ENCODE measurements at regions of chr9 and their contacts with region 1.

Region 1: GRCh38 chr9:81552581-81552991 is 136.8 kb downstream of the TLE1 start:
- DNase-seq: no peak
- H3K4me3 ChIP-seq: no peak overlapping the region
- H3K27ac ChIP-seq: no peak overlapping the region
- H3K4me1 ChIP-seq: peaks cover 4 to 21% (median 14%) of the 10 kb centered on the region in 4 donors
- H3K27me3 ChIP-seq: no peaks in the 10 kb centered on the region
- CTCF ChIP-seq: no peak
- EP300 ChIP-seq: no peak
- POLR2A ChIP-seq: no peak

Region 2: GRCh38 chr9:80842389-80842788 is 710.2 kb before region 1 on chr9:
- in situ Hi-C with region 1: no loop called
- intact Hi-C with region 1: no loop called
- DNase-seq: no peak
- H3K4me3 ChIP-seq: no peak overlapping the region
- H3K27ac ChIP-seq: no peak overlapping the region
- H3K4me1 ChIP-seq: peaks cover 0 to 6% (median 0%) of the 10 kb centered on the region in 4 donors
- H3K27me3 ChIP-seq: no peaks in the 10 kb centered on the region
- CTCF ChIP-seq: no peak
- EP300 ChIP-seq: no peak
- POLR2A ChIP-seq: no peak

Region 3: DNA sequence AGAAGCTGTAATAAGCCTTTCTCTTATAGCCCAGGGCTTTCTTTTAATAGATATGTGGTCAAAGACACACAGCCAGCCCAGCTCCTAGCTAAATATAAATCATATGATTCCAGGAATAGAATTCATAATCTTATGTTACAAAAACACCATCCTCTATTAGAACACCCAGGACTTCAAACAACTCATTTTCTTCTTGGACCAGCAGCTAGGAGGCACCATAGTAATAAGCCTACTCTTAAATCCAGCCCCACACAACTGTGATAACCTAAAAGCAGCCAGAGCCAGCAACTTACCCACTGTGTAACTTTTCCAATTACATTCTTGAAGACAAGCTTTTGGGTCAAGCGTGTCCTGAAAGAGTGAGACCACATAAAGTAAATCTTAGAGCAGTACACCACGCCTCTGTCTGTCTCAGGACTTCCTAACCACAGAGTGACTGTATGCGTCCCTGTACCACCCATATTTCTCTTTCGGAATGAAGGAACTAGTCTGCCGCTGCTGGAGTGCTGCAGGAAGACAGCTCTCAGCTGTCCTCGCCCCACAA is 87.0 kb before region 1 on chr9:
- in situ Hi-C with region 1: no loop called
- intact Hi-C with region 1: no loop called
- DNase-seq: no peak
- H3K4me3 ChIP-seq: no peak overlapping the region
- H3K27ac ChIP-seq: no peak overlapping the region
- H3K4me1 ChIP-seq: peaks cover 0 to 4% (median 0%) of the 10 kb centered on the region in 4 donors
- H3K27me3 ChIP-seq: no peaks in the 10 kb centered on the region
- CTCF ChIP-seq: peak in 1 of 5 experiments; percentile 13
- EP300 ChIP-seq: no peak
- POLR2A ChIP-seq: no peak

Region 4: DNA sequence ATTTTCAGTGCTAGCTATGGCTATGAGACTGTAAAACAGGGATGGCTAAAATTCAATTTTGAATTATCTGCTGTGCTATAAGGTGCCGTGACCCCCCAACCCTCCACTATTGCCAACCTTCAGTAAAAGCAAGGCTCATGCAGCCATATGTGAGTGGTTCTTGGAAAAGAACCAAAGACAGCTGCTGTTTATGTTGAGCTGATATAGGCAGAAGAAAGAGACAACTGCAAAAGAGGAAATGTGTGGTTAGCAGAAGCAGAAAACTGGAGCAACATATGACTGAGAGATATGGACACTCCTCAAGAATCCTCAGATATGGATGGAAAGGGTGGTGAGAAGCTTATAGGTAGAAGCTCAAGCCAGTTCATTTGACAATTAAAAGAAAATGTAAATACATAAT is 63.5 kb before region 1 on chr9:
- in situ Hi-C with region 1: loop called in 1 of 4 experiments (anchors 10 kb)
- intact Hi-C with region 1: no loop called
- DNase-seq: no peak
- H3K4me3 ChIP-seq: no peak overlapping the region
- H3K27ac ChIP-seq: no peak overlapping the region
- H3K4me1 ChIP-seq: peaks cover 0 to 6% (median 0%) of the 10 kb centered on the region in 4 donors
- H3K27me3 ChIP-seq: no peaks in the 10 kb centered on the region
- CTCF ChIP-seq: no peak
- EP300 ChIP-seq: no peak
- POLR2A ChIP-seq: no peak

Region 5: DNA sequence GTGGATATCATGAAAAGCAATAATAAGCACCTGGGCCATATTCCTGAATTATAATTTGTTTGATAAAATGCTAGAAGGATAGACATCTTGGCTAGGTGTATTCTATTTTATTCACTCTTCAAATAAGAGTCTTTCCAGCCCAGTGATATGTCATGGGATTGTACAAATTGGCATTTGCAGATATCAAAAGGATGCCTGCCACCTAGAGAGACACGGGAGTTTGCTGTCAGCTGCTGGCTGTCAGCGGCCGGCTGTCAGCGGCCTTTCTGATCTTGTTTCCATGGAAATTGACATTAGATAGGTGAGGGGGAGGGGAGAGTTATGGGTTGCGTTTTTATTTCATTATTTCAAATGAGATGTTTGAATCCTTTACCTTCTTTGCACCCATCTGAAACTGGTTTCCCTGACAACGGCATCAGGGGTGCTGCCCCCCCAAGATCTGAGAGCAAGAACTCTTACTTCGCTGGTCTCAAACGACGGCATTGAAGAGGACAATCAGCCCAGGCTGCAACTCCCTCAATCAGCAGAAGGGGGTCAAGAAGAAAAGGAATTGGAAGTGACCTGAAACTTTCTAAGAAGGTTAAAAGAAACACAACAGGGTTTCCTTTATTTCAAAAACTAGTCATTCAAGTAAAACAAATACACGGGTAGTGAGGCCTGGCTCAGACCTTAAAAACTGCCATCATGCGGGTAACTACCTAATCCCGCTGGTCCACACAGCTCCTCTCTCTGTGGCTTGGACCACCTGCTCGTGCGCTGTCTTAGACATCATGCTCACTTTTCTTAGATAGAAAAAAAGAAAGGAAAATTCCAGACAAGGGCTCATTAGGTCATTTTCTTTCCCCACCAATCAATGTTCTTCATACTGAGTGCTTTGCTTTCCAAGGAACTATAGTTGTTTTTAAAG is 21.1 kb after region 1 on chr9:
- in situ Hi-C with region 1: no loop called
- intact Hi-C with region 1: loop called (anchors 1 kb)
- DNase-seq: no peak
- H3K4me3 ChIP-seq: no peak overlapping the region
- H3K27ac ChIP-seq: no peak overlapping the region
- H3K4me1 ChIP-seq: no peaks in the 10 kb centered on the region
- H3K27me3 ChIP-seq: no peaks in the 10 kb centered on the region
- CTCF ChIP-seq: no peak
- EP300 ChIP-seq: no peak
- POLR2A ChIP-seq: no peak

Region 6: DNA sequence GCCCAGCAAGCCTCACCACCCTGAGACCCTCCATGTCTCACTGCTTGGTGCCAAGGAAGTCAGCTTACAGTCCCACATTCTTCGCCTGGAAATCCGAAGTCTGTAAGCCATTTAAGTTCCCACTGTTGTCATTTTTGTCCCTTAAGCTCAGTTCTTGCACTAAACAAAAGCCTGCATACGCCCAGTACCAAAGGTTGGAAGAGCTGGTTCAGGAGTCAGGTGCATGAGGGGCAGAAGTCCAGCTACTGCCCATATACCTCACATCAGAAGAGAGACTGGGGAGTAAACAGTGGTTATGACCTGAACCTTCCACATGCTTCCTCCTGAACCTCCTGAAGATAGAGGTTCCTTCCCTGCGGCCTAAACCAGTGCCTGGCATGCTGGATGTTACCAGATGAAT is 1839.6 kb after region 1 on chr9:
- in situ Hi-C with region 1: no loop called
- intact Hi-C with region 1: no loop called
- DNase-seq: no peak
- H3K4me3 ChIP-seq: no peak overlapping the region
- H3K27ac ChIP-seq: no peak overlapping the region
- H3K4me1 ChIP-seq: no peaks in the 10 kb centered on the region
- H3K27me3 ChIP-seq: no peaks in the 10 kb centered on the region
- CTCF ChIP-seq: no peak
- EP300 ChIP-seq: no peak
- POLR2A ChIP-seq: no peak

Measured in transverse colon (tissue), 4 donors.